PC-9 (cell line): ENCODE measurements at regions of chr18 and their contacts with region 1.

Region 1: DNA sequence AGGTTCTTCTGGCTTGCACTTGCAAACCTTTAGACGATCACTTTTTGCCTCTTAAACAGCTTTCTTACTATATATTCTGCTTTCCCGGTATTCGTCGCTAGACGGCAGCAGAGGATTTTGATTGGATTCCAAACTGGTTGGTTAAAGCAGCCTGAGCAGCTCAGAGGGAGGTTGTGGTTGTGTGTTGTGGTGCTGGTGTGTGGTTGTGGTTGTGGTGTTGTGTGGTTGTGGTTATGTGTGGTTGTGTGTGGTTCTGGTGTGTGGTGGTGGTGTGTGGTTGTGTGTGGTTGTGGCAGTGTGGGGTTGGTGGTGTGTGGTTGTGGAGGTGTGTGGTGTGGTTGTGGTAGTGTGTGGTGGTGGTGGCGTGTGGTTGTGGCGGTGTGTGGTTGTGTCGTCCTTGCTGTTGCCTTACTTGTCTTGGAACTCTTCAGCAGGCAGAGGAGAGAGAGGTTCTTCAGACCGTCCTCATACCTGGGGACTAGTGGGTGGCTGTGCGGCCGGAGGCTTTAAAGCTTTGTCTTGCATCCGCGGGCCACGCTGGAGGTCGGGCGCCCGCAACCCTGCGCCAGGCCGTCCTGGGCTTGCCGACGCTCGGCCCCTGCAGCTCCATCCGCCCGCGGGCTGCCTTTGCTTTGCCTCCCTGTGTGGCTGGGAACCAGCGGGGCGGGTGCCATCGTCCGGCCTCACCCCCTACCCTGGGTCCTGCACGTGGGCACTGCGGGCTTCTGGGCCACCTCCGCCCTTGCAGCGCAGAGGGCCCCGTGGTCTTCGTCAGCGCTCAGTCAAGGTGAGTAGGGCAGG is 190.8 kb downstream of the ARHGAP28 start:
- DNase-seq: peak; percentile 34 to 43
- H3K4me3 ChIP-seq: no peak overlapping the region
- H3K27ac ChIP-seq: no peak overlapping the region
- H3K4me1 ChIP-seq: no peaks in the 10 kb centered on the region
- H3K27me3 ChIP-seq: peaks cover 27% of the 10 kb centered on the region
- CTCF ChIP-seq: peak; percentile 81

Region 2: DNA sequence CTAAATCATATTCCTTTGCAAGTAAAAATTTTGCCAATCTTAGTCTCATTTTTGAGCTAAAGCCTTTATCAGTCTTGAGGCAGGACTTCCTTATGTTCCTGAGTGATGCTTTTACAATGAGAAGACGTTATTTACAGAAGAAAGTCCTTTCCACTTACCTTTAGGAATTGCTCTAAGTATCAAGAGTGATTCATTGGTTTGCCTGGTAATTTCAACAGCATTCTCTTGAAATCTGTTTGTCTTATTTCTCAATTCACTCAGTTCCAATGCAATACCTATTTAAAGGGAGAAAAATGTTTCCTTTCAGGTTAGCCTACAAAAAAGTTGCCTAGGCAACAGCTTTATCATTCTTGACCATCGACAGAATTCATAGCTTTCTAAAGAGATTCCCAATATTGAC is 60.1 kb after region 1 on chr18:
- CTCF ChIA-PET with region 1: no interaction called
- POLR2A ChIA-PET with region 1: no interaction called
- intact Hi-C with region 1: no loop called
- DNase-seq: peak in 1 of 2 experiments; percentile 38
- H3K4me3 ChIP-seq: no peak overlapping the region
- H3K27ac ChIP-seq: no peak overlapping the region
- H3K4me1 ChIP-seq: no peaks in the 10 kb centered on the region
- H3K27me3 ChIP-seq: peaks cover 68% of the 10 kb centered on the region
- CTCF ChIP-seq: no peak

Region 3: DNA sequence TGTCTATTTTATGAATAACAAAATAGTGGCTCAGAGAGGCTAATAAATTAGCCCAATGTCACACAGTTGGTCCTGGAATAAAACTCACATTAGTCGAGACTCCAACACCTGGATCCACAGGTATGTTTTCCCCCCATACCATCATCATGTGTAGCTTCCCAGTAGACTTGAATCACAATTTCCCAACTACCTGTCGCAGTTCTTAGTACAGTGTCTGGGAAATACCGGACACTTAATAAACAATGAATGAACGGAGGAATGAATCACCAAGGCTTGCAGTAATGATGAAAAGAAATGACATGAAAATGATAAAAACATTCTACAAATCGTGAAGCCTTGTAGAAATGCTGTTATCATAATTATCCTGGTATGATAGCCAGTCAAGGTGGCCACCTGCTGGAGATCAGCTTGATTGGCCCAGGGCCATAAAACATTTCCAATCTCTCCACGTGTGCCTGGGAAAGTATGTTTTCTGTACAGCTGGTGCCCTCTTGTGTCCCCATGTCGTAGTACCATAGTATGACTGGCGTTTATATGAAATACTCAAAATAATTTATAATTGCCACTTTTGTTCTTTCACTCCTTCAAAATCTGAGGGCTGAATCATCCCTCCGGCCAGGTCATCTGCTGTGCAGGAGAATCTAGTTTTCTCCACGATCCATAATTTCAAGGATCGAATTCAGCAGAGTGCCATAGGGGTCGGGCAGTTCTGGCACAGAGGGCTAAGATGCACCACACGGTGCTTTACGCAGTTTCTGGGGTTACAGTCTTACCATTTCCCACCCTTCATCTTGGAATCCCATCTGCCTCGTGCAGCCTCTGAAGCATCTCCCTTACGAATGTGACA is 101.9 kb after region 1 on chr18:
- CTCF ChIA-PET with region 1: no interaction called
- POLR2A ChIA-PET with region 1: no interaction called
- intact Hi-C with region 1: loop called (anchors 5 kb)
- DNase-seq: peak; percentile 30 to 60
- H3K4me3 ChIP-seq: no peak overlapping the region
- H3K27ac ChIP-seq: no peak overlapping the region
- H3K4me1 ChIP-seq: no peaks in the 10 kb centered on the region
- H3K27me3 ChIP-seq: peaks cover 67% of the 10 kb centered on the region
- CTCF ChIP-seq: peak; percentile 66

Region 4: DNA sequence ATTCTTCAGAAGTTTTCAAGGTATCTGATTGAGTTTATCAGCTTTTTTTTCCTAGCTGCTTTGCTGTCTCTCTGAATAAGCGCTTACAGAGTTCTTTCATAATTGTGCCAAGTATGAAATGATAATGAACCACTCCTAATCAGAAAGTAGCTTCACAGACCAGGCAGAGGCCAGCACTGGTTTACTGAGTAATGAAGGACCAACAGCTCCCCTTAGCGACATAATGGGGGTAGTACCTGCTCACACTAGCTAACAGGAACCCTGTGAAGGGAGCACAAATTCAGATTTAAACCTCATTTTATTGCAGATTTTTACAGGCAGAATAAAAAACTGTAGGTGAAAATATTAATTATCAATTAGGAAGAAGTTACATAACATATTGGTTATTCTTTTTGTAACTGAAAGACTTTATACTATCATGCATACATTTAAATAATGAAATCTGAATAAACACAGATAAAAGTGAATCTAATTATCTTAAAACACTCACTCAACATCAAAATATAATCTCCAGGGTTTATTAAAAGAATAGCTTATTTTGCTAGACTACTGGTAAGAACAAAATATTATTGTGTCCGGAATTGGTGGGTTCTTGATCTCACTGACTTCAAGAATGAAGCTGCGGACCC is 256.9 kb after region 1 on chr18:
- CTCF ChIA-PET with region 1: interaction called, 3 read pairs
- POLR2A ChIA-PET with region 1: no interaction called
- intact Hi-C with region 1: loop called (anchors 1 kb)
- DNase-seq: peak in 1 of 2 experiments; percentile 19
- H3K4me3 ChIP-seq: no peak overlapping the region
- H3K27ac ChIP-seq: no peak overlapping the region
- H3K4me1 ChIP-seq: no peaks in the 10 kb centered on the region
- H3K27me3 ChIP-seq: peaks cover 81% of the 10 kb centered on the region
- CTCF ChIP-seq: peak; percentile 68